Ovary (tissue), 10 donors: ENCODE measurements at regions of chr1 and their contacts with region 1.

Region 1: DNA sequence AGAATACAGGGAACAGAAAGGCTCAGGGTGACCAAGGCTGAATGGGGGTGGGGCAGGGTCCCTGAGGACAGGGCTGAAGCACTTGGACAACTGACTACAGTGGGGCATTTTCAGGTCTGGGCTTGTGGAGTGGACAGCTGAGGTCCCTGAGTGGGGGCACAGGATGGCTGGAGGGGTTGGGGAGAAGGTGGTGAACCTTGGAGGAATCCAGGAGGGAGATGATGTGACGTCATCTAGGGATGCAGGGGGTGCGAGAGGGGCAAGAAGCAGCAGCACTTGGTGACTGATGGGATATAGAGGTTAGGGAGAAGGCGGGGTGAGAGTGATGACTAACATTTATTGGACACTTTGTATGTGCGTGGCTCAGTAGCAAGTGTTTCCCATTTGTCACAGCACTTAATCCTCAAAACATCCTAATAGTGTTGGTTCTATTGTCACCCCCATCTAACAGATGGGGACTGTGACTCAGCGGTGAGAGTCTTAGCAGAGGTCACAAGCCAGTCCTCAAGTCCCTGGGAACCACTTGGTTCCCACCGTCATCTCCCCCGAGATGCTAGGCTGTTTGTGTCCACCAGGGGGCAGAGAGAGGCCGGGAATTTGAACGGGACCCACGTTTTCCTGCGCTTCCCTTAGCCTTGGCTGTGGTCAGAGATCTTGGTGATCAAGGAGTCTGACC is 27.9 kb upstream of the BMP8B start:
- DNase-seq: peak in 4 of 5 donors; percentile 41 to 69 (median 65)
- H3K4me3 ChIP-seq: no peak overlapping the region
- H3K27ac ChIP-seq: no peak overlapping the region
- H3K4me1 ChIP-seq: no peaks in the 10 kb centered on the region
- H3K27me3 ChIP-seq: no peaks in the 10 kb centered on the region
- CTCF ChIP-seq: peak; percentile 36 to 90 (median 87)
- EP300 ChIP-seq: no peak
- POLR2A ChIP-seq: no peak

Region 2: DNA sequence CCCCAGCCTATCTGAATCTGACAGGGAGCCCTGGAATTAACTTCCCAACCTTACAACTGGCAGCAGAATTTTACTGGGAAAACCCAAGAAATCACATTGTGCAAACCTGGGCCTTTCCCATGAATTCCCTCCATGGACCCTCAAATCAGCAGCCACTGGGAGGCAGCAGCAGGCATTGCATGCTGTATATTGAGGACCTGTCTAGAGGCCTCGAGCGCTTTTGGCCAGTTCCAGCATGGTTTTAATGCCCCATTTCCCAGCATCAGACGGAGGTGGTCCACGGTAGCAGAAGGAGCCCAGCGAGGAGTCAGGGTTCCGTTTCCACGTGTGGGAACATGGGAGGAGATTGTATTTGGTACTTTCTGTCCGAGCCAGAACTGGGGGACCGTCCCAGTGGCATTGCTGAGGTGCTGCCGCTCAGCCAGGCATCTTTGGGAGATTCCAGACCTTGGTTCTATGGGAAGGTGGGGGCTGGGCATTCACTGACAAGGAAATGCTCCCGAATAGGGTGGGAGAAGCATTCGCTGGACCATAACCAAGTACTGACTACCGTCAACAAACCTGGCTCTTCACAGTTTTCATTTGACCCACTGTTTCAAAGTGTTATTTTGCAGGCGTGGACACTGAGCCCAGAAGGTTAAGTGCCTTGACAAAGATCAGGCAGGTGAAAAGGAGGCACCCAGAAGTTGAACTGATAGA is 309.2 kb before region 1 on chr1:
- intact Hi-C with region 1: no loop called
- DNase-seq: peak in 1 of 5 donors; percentile 37
- H3K4me3 ChIP-seq: no peak overlapping the region
- H3K27ac ChIP-seq: no peak overlapping the region
- H3K4me1 ChIP-seq: no peaks in the 10 kb centered on the region
- H3K27me3 ChIP-seq: no peaks in the 10 kb centered on the region
- CTCF ChIP-seq: no peak
- EP300 ChIP-seq: no peak
- POLR2A ChIP-seq: no peak

Region 3: DNA sequence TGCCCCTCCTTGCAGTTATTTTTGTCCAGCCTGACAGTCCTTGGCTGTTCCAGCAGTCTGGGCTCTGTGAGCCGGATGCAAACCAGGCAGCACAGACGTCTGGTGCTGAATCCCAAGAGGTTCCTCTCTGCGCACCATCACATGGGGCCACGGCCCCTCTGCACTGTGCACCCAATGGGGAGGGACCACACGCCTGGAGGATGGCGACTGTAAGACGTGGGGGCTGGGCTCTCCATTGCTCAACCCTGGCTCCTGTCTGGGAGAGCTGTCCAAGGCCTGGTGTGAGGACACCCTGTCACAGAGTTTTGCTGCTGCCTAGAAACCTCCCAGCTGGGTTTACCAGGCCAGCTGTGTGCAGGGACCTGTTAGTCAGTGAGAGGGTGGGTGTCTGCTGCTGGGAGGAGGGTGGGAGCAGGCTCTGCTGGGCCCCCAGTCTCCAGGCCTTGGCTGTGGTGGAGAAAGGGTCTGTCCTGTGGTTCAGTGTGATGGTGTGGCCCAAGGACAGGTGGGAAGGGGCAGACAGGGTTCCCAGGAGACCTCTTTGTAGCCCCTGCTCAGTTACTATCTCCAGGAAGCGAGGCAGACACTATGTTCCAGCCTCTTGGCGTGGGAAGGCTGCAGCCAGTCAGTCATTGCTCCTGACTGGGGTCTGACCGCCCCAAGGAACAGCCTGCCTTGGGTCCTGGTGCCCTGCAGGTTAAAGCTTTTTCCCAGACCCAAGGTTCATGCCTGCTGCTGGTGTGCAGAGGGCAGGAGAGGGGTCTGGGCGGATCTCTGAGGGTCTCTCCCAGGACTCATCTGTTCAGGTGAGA is 190.9 kb before region 1 on chr1:
- intact Hi-C with region 1: no loop called
- DNase-seq: peak; percentile 71 to 90 (median 85)
- H3K4me3 ChIP-seq: no peak overlapping the region
- H3K27ac ChIP-seq: peak overlapping the region in 1 of 2 donors; percentile 33
- H3K4me1 ChIP-seq: peaks cover 8% of the 10 kb centered on the region
- H3K27me3 ChIP-seq: no peaks in the 10 kb centered on the region
- CTCF ChIP-seq: no peak
- EP300 ChIP-seq: peak; percentile 73
- POLR2A ChIP-seq: no peak

Region 4: DNA sequence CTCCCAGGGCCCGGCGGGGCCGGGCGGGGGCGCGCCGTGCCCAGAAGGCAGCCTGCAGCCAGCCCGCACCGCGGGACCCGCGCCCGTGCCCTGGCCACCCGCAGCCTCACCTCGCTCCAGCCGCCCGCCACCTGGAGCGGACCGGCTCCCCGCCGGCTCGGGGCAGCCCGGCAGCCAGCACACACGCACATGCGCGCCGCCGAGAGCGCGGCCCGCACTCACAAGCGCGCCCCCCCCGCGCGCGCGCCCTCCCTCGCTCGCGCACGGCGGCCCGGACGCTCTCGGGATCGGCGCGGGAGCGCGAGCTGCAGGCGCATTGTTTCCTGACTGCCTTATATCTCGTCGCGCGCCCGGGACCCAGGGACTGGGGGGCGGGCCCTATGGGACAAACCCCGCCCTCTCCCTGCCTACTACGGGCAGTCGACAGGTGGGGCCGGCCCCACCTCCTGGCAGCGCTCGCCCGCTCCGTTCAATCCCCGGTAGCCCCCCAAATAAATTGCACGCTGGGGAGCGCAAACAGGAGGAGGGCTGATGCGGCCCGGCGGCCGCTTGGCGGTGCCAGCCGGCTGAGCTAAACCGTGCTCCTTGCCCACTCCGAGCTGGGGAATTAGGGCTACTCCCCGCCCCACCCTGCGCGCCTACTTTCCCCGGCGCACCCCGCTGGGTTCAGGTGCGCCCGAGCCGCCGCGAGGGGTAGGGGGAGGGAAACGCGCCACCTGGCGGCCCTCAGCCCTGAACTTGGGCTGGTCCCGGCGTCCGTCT is 85.3 kb after region 1 on chr1 and contains the start of gene MYCL:
- intact Hi-C with region 1: loop called in 2 of 4 experiments (anchors 5 kb)
- DNase-seq: peak; percentile 35 to 66 (median 42)
- H3K4me3 ChIP-seq: peak within 1 kb of the TSS; percentile 32
- H3K27ac ChIP-seq: no peak within 1 kb of the TSS
- H3K4me1 ChIP-seq: peaks cover 10% of the 10 kb centered on the region
- H3K27me3 ChIP-seq: no peaks in the 10 kb centered on the region
- CTCF ChIP-seq: peak in 2 of 3 donors; percentile 38 to 45
- EP300 ChIP-seq: no peak
- POLR2A ChIP-seq: no peak
- total RNA-seq, gene MYCL: 0.24 to 4.8 (median 0.96) TPM in 6 of 7 donors, not detected in the other

Region 5: GRCh38 chr1:39973503-39974135 is 157.1 kb after region 1 on chr1:
- intact Hi-C with region 1: loop called (anchors 1 to 5 kb)
- DNase-seq: peak; percentile 58 to 80 (median 76)
- H3K4me3 ChIP-seq: no peak overlapping the region
- H3K27ac ChIP-seq: no peak overlapping the region
- H3K4me1 ChIP-seq: no peaks in the 10 kb centered on the region
- H3K27me3 ChIP-seq: no peaks in the 10 kb centered on the region
- CTCF ChIP-seq: peak; percentile 82 to 85 (median 83)
- EP300 ChIP-seq: no peak
- POLR2A ChIP-seq: no peak